Activated CD4-positive, alpha-beta T cell treated with anti-CD3 and anti-CD28 coated beads for 36 hours (primary cell): ENCODE measurements at regions of chr2 and their contacts with region 1.

Region 1: GRCh38 chr2:178602901-178603300 is 122.6 kb downstream of the PLEKHA3 start:
- DNase-seq: no peak
- ATAC-seq: no peak
- H3K4me3 Mint-ChIP-seq: no peak overlapping the region
- H3K27ac Mint-ChIP-seq: no peak overlapping the region
- H3K4me1 Mint-ChIP-seq: no peaks in the 10 kb centered on the region
- H3K27me3 Mint-ChIP-seq: no peaks in the 10 kb centered on the region

Region 2: DNA sequence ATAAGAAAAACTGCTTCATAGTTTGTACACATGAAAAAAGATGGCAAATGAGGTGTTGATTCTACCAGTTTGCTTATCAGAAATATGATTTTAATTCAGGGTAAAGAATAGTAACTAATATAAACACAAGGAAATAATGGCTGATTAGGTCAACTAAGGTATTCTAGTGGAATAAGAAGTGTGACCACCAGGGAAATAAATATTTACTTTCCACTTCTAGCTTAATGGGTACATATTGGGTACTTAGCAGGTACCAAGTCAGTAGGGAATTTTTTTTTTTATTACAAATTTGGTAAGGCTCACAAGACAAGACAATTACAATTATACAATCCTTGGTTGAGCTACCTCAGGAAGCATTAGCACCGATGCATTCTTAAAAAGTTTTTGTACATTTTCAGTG is 13.1 kb after region 1 on chr2:
- CTCF ChIA-PET with region 1: interaction called, 4 read pairs
- POLR2A ChIA-PET with region 1: no interaction called
- intact Hi-C with region 1: loop called in 1 of 2 experiments (anchors 2 kb)
- DNase-seq: no peak
- ATAC-seq: no peak
- H3K4me3 Mint-ChIP-seq: no peak overlapping the region
- H3K27ac Mint-ChIP-seq: no peak overlapping the region
- H3K4me1 Mint-ChIP-seq: no peaks in the 10 kb centered on the region
- H3K27me3 Mint-ChIP-seq: no peaks in the 10 kb centered on the region